Sciatic nerve (tissue), 2 donors: ENCODE measurements at regions of chr6 and their contacts with region 1.

Region 1: DNA sequence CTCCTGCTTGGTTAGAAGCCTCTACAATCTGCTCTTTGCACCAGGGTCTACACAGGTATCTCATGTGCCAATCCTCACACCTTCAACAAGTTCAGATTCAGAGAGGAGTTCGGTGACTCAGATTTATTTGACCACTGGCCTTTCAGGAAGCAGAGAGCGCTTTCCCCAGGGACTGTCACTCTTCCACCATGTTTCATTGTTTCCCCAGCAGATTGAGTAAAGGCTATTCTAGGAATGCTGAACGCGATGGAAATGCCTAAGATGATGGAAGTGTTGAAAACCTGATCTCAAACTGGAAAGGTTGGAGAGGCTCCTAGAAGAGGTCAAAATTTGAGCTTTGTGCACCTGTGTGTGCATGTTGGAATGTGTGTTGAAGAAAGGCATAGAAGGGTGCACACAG is 76.6 kb upstream of the GPR6 start:
- DNase-seq: no peak
- ATAC-seq: no peak

Region 2: DNA sequence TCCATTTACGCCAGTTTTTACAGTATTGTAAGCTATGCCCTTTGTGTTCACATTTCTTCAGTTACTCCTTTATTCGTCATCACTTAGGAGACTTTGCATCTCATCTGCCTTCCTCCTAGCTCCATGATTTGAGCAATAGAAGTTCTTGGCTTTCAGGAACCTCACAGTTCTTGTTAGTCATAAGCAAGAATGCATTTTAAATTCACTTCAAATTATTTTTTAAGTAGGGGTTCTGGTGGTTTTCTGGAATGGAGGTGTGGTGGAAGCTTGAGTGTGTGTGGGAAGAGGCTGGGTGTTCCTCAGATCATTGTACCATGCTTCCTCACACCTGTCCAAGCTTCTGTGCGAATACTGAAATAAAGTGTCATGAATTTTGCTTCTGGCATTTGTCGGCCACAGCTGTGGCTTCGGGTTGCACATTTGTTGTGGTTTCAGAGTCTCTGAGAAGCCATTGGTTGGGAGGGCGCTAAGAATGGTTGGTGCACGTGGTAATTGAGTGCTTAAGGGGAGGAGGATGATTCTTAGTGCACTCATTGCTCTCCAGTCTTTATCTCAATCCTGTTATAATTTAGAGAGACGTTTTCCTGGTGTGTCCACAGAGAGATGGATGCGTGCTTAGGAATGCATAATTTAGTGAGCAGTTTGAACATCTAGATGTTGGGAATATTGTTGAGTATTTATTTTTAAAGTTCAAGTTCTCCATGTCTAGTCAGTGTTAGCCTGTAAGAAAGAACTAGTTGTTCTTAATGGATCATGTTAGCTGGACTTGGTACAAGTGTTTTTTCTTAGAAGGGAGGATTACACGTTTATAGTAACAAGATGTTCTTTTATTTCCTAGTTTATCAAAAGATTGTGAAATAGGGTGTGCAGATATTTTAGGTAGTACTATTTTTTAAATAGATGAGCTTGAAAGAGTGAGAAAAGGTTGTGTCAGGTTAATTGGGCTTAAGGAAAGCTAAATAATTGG is 1308.9 kb before region 1 on chr6:
- intact Hi-C with region 1: loop called (anchors 5 kb)
- DNase-seq: no peak
- ATAC-seq: peak; percentile 68

Region 3: GRCh38 chr6:109867009-109867969 is 34.2 kb before region 1 on chr6:
- intact Hi-C with region 1: no loop called
- DNase-seq: peak; percentile 80
- ATAC-seq: peak; percentile 81

Region 4: GRCh38 chr6:110207652-110208051 is 306.1 kb after region 1 on chr6:
- intact Hi-C with region 1: no loop called
- DNase-seq: no peak
- ATAC-seq: no peak